ENCODE measurements at regions of chr14 and their contacts with region 1.

Region 1: DNA sequence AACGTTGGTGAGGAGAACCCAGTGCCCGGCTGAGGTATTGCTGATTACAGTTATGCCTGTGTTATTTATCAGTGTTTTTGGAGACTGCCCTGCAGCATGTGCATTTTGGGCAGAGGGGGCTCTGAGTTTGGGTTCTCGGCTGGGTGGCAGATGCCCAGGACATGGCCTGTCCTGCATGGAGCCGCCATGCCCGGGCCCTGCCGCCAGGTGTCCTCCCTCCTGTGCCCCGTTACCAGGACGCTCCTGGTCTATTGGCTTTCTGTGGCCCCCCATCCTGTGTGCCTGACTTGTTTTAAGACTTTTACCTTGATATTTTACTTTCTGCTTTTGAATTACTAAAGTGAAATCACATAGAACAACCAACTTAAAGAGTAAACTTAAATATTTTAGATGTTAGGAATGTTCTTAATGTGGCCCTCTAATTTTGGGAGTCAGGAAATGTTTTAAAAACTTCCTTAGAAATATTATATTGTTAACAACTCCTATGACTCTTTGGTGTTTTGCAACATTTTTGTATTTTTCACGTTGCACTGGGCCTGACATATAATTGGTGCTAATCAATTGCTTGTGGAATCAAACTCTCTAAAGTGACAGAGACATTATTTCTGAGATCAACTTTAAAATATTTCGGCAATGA is 51.8 kb downstream of the PRIMA1 start:
- DNase-seq: peak; percentile 49
- H3K4me3 Mint-ChIP-seq: no peak overlapping the region
- H3K27ac Mint-ChIP-seq: no peak overlapping the region
- H3K4me1 Mint-ChIP-seq: no peaks in the 10 kb centered on the region
- H3K27me3 Mint-ChIP-seq: peaks cover 80% of the 10 kb centered on the region
- CTCF ChIP-seq: peak; percentile 22

Region 2: GRCh38 chr14:93892923-93893558 is 156.5 kb after region 1 on chr14:
- CTCF ChIA-PET with region 1: no interaction called
- intact Hi-C with region 1: loop called (anchors 10 kb)
- DNase-seq: peak; percentile 85
- H3K4me3 Mint-ChIP-seq: no peak overlapping the region
- H3K27ac Mint-ChIP-seq: no peak overlapping the region
- H3K4me1 Mint-ChIP-seq: no peaks in the 10 kb centered on the region
- H3K27me3 Mint-ChIP-seq: peaks cover 71% of the 10 kb centered on the region
- CTCF ChIP-seq: peak; percentile 96